Lower leg skin (tissue), 4 donors: ENCODE measurements at regions of chr12 and their contacts with region 1.

Region 1: DNA sequence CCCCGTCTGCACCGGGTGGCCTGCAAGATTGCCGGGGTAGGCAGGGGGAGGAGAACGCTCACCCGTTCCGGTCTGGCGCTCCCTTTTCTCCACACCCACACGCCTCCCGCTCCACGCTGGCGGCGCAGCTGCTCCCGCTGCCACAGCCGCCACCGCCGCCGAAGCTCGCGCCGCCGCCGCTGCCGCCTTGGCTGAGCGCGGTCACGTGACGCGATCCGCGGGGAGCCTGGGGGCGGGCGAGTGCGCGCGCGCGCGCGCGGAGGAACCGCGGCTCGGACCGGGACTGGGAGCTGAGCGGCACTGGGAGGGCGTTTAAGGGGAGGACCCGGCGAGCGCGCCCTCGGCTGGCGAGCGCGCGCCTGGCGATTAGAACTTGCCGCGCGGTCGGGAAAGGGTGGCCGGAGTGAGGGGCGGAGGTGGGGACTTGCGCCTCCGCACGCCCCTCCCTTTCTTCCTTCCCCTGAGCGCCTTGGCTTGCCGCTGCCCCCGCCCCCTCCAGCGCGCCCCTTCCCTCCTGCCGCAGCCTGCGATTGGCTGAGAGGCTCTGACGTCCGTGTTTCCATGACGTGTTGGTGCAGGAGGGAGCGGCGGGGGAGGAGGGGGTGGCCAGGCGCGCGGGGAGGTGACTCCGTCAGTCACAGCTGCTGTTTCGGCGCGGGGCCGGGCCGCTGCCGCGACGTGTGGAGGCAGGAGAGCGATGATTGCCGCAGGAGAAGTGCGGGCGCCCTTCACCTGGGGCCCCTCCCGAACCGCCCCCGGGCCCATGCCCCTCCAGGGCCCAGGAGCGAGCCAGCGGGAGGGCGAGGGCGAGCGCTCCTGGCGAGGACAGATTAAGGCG is 738 bp upstream of the ATP2B1 start:
- DNase-seq: peak; percentile 99 to 100
- H3K4me3 ChIP-seq: peak overlapping the region; percentile 83
- CTCF ChIP-seq: no peak
- POLR2A ChIP-seq: peak in 1 of 2 donors; percentile 85

Region 2: DNA sequence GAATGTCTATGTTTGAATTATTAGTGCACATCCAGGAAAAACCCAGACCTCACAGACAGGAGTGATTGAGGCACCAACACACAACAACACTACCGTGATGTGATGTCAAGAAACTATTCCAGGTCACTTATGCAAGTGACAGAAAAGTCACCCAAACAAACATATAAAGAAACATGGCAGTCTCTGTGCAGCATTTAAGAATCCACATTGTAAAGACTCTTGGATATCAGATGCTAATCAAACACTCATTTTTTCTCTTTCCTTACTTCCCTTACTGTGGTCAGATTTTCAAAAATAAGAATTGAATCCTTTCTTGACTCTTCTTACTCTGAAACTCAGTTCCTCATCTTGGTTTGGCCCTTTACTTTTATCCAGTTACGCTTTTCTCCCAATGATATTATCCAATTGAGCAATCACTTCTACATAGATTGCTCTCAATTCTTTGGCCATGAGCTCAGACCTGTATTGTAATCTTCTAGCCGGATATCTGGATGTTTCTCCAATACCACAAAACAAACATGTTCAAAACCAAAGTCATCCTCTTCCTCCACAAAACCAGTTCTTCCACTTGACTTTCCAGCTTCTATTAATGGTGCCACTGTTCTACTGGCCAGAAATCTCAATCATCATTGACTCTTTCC is 472.5 kb before region 1 on chr12:
- intact Hi-C with region 1: loop called (anchors 10 kb)
- DNase-seq: no peak
- H3K4me3 ChIP-seq: no peak overlapping the region
- CTCF ChIP-seq: no peak
- POLR2A ChIP-seq: no peak

Region 3: DNA sequence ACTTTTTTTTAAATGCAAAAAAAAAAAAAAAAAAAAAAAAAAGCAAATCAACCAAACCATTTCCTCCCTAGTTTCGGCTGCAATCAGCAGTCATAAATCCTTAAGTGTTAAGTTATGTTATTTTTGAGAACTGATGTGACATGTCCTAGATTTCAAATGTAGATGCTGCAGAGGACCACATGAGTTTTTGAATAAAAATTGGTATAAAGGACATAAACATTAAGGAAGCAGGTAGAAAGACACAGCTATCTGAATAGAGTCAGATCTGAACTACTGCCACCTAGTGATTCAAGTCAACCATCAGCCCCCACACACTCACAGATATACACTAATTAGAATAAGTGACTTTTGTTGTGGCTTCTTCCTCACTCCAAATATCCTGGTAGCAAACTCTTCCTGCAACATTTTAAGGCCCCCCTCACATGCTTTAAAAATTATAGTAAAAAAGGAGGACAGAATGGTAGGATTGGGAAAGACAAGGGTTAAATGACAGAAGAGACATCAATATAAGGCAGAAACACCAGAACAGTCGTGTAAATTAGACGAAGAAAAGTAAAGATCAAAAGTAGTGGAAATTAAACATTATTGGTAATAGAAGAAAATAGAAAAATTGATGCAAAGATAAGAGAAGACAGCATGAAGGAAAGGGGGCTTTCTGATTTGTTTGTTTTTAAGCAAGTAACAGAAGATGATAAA is 393.7 kb after region 1 on chr12:
- intact Hi-C with region 1: no loop called
- DNase-seq: no peak
- H3K4me3 ChIP-seq: no peak overlapping the region
- CTCF ChIP-seq: no peak
- POLR2A ChIP-seq: no peak